Naive thymus-derived CD4-positive, alpha-beta T cell (primary cell): ENCODE measurements at regions of chr3 and their contacts with region 1.

Region 1: GRCh38 chr3:157103280-157103679 is 56.7 kb downstream of the CCNL1 start:
- DNase-seq: no peak
- ATAC-seq: no peak
- H3K4me3 ChIP-seq: no peak overlapping the region
- H3K4me3 Mint-ChIP-seq: peak overlapping the region in 1 of 10 donors; percentile 42
- H3K27ac ChIP-seq: no peak overlapping the region
- H3K27ac Mint-ChIP-seq: peak overlapping the region in 3 of 9 donors; percentile 42 to 86 (median 75)
- H3K4me1 ChIP-seq: peaks cover 0 to 11% of the 10 kb centered on the region in 2 donors
- H3K4me1 Mint-ChIP-seq: peaks cover 0 to 60% (median 7%) of the 10 kb centered on the region in 7 donors
- H3K27me3 ChIP-seq: no peaks in the 10 kb centered on the region
- H3K27me3 Mint-ChIP-seq: no peaks in the 10 kb centered on the region

Region 2: GRCh38 chr3:157088601-157089454 is 14.5 kb before region 1 on chr3:
- CTCF ChIA-PET with region 1: interaction called, 3 read pairs
- POLR2A ChIA-PET with region 1: interaction called, 4 read pairs
- intact Hi-C with region 1: loop called in 1 of 2 experiments (anchors 2 kb)
- DNase-seq: peak; percentile 90 to 97 (median 93)
- ATAC-seq: peak; percentile 95
- H3K4me3 ChIP-seq: peak overlapping the region; percentile 84
- H3K4me3 Mint-ChIP-seq: peak overlapping the region; percentile 81 to 89 (median 87)
- H3K27ac ChIP-seq: peak overlapping the region; percentile 83
- H3K27ac Mint-ChIP-seq: peak overlapping the region; percentile 92 to 98 (median 96)
- H3K4me1 ChIP-seq: peaks cover 11 to 30% of the 10 kb centered on the region in 2 donors
- H3K4me1 Mint-ChIP-seq: peaks cover 11 to 79% (median 23%) of the 10 kb centered on the region in 7 donors
- H3K27me3 ChIP-seq: no peaks in the 10 kb centered on the region
- H3K27me3 Mint-ChIP-seq: peaks cover 0 to 6% (median 0%) of the 10 kb centered on the region in 5 donors

Region 3: GRCh38 chr3:157119369-157119951 is 16.2 kb after region 1 on chr3:
- CTCF ChIA-PET with region 1: interaction called, 5 read pairs
- POLR2A ChIA-PET with region 1: interaction called, 7 read pairs
- intact Hi-C with region 1: loop called in 1 of 2 experiments (anchors 2 kb)
- DNase-seq: no peak
- ATAC-seq: peak; percentile 68
- H3K4me3 ChIP-seq: no peak overlapping the region
- H3K4me3 Mint-ChIP-seq: peak overlapping the region in 1 of 10 donors; percentile 47
- H3K27ac ChIP-seq: no peak overlapping the region
- H3K27ac Mint-ChIP-seq: peak overlapping the region in 4 of 9 donors; percentile 8 to 70 (median 37)
- H3K4me1 ChIP-seq: peaks cover 0 to 9% of the 10 kb centered on the region in 2 donors
- H3K4me1 Mint-ChIP-seq: peaks cover 0 to 30% (median 2%) of the 10 kb centered on the region in 7 donors
- H3K27me3 ChIP-seq: no peaks in the 10 kb centered on the region
- H3K27me3 Mint-ChIP-seq: no peaks in the 10 kb centered on the region

Region 4: DNA sequence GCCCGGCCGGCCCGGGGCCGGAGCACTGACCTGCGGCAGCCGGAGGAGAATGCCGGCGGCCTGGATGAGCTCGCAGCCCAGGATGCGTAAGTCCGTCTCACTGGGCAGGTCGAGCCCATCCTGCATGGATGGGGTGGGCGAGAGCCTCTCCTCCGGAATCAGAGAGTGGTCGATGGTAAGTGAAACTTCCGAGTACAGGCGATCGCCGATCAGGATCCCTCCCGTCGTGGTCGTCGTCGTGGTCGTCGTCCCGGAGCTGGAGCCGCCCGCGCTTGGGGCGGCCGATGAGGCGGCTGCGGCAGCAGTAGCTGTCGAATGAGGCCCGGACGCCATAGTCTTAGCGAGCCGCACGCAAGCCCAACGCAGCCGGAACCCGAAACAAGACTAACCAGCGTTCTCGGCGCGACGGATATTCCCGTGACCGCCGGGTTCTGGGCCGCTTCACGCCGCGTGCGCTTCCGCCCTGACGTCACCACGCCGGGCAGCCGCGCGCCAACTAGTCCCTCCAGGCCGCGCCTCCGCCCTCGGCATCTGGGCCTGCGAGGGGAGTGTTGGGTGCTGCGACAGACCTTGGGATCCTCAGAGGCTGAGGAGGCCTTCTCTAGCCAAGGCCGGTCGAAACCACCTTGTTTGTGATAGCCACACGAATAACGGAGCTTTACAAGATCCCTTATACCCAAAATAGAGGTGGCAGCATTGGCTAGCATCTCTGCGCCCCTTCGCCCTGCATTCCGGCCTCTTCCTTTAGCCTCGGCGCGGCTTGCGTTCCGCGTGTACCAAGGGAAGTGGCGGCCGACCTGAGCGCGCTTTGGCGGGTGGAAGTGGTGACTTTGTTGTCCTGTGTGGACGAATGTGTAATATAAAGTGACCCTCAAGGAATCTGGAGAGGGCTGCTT is 56.7 kb after region 1 on chr3 and contains the start of gene CCNL1:
- CTCF ChIA-PET with region 1: no interaction called
- POLR2A ChIA-PET with region 1: no interaction called
- intact Hi-C with region 1: no loop called
- DNase-seq: peak; percentile 94 to 98 (median 97)
- ATAC-seq: peak; percentile 88
- H3K4me3 ChIP-seq: peak within 1 kb of the TSS; percentile 92
- H3K4me3 Mint-ChIP-seq: peak within 1 kb of the TSS; percentile 91 to 100 (median 96)
- H3K27ac ChIP-seq: peak within 1 kb of the TSS; percentile 97
- H3K27ac Mint-ChIP-seq: peak within 1 kb of the TSS; percentile 96 to 100 (median 98)
- H3K4me1 ChIP-seq: peaks cover 39 to 45% of the 10 kb centered on the region in 2 donors
- H3K4me1 Mint-ChIP-seq: peaks cover 37 to 69% (median 65%) of the 10 kb centered on the region in 7 donors
- H3K27me3 ChIP-seq: no peaks in the 10 kb centered on the region
- H3K27me3 Mint-ChIP-seq: no peaks in the 10 kb centered on the region
- total RNA-seq, gene CCNL1: 230 to 1,170 (median 374) TPM

Region 5: GRCh38 chr3:158091531-158091930 is 988.3 kb after region 1 on chr3:
- CTCF ChIA-PET with region 1: no interaction called
- POLR2A ChIA-PET with region 1: no interaction called
- intact Hi-C with region 1: no loop called
- DNase-seq: no peak
- ATAC-seq: no peak
- H3K4me3 ChIP-seq: no peak overlapping the region
- H3K4me3 Mint-ChIP-seq: no peak overlapping the region
- H3K27ac ChIP-seq: no peak overlapping the region
- H3K27ac Mint-ChIP-seq: no peak overlapping the region
- H3K4me1 ChIP-seq: no peaks in the 10 kb centered on the region
- H3K4me1 Mint-ChIP-seq: peaks cover 0 to 6% (median 0%) of the 10 kb centered on the region in 7 donors
- H3K27me3 ChIP-seq: peaks cover 8 to 24% of the 10 kb centered on the region in 2 donors
- H3K27me3 Mint-ChIP-seq: peaks cover 77 to 88% (median 84%) of the 10 kb centered on the region in 5 donors